GM13977 (cell line): ENCODE measurements at regions of chr20 and their contacts with region 1.

Region 1: GRCh38 chr20:24469116-24469893 is at the start of gene SYNDIG1:
- DNase-seq: no peak
- CTCF ChIP-seq: no peak

Region 2: GRCh38 chr20:23879811-23880374 is 589.4 kb before region 1 on chr20:
- in situ Hi-C with region 1: no loop called
- DNase-seq: no peak
- CTCF ChIP-seq: no peak

Region 3: DNA sequence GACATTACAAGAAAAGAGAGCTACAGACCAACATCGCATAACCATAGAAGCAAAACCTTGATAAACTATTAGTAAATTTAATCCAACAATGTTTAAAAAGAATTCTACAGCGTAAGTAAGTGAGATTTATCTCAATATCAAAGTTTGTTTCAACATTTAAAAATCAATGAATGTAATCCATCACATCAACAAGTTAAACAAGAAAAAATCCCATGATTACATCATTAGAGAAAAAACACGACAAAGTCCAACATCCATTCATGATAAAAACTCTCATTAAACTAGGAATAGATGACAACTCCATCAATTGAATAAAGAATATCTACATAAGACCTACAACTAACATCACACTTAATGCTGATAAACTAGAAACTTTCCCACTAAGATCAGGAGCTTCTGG is 241.7 kb before region 1 on chr20:
- in situ Hi-C with region 1: no loop called
- DNase-seq: no peak
- CTCF ChIP-seq: no peak

Region 4: GRCh38 chr20:24350923-24351368 is 118.4 kb before region 1 on chr20:
- in situ Hi-C with region 1: loop called (anchors 25 kb)
- DNase-seq: no peak
- CTCF ChIP-seq: no peak

Region 5: GRCh38 chr20:24545168-24545567 is 75.9 kb after region 1 on chr20:
- in situ Hi-C with region 1: no loop called
- DNase-seq: no peak
- CTCF ChIP-seq: no peak